ENCODE measurements at regions of chr18 and their contacts with region 1.

Region 1: GRCh38 chr18:64330161-64330560 is 181.3 kb upstream of the LINC00305 start:
- DNase-seq: no peak
- H3K4me3 Mint-ChIP-seq: no peak overlapping the region
- H3K27ac Mint-ChIP-seq: no peak overlapping the region
- H3K4me1 Mint-ChIP-seq: peaks cover 7% of the 10 kb centered on the region
- H3K27me3 Mint-ChIP-seq: no peaks in the 10 kb centered on the region
- CTCF ChIP-seq: no peak

Region 2: DNA sequence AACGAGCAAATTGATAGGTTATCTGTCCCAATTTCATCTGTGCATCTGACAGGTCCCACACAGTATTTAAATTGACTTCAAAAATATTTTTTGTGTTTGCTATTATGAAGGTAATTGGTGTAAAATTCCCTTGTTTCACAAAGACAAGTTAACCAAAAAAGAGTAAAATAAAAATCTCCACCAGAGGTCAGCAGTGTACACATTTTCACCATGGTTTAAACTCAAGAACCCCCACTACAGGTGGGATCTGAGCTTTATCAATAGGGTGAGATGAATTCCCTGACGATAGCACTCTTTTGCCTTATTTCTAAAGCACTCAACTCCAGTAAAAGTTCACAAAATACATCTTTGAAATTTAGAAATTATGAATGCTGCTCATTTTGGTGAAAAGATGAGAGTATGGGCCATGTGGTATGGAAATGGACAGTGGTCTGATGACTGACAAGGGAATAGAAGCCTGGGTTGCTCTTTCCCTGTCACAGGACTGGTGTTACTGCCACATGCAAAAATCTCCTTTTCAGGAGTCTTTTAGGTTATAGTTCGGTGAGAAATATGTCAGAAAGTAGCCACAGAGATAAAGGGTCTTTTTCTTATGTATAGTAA is 292.2 kb before region 1 on chr18:
- CTCF ChIA-PET with region 1: no interaction called
- intact Hi-C with region 1: loop called (anchors 5 kb)
- DNase-seq: no peak
- H3K4me3 Mint-ChIP-seq: no peak overlapping the region
- H3K27ac Mint-ChIP-seq: no peak overlapping the region
- H3K4me1 Mint-ChIP-seq: no peaks in the 10 kb centered on the region
- H3K27me3 Mint-ChIP-seq: no peaks in the 10 kb centered on the region
- CTCF ChIP-seq: peak; percentile 61

Region 3: GRCh38 chr18:64100116-64100922 is 229.8 kb before region 1 on chr18:
- CTCF ChIA-PET with region 1: no interaction called
- intact Hi-C with region 1: loop called (anchors 5 kb)
- DNase-seq: no peak
- H3K4me3 Mint-ChIP-seq: peak overlapping the region; percentile 22
- H3K27ac Mint-ChIP-seq: no peak overlapping the region
- H3K4me1 Mint-ChIP-seq: peaks cover 11% of the 10 kb centered on the region
- H3K27me3 Mint-ChIP-seq: no peaks in the 10 kb centered on the region
- CTCF ChIP-seq: no peak

Region 4: GRCh38 chr18:64119916-64120315 is 210.2 kb before region 1 on chr18:
- CTCF ChIA-PET with region 1: no interaction called
- intact Hi-C with region 1: loop called (anchors 1 kb)
- DNase-seq: no peak
- H3K4me3 Mint-ChIP-seq: no peak overlapping the region
- H3K27ac Mint-ChIP-seq: no peak overlapping the region
- H3K4me1 Mint-ChIP-seq: no peaks in the 10 kb centered on the region
- H3K27me3 Mint-ChIP-seq: no peaks in the 10 kb centered on the region
- CTCF ChIP-seq: peak; percentile 33